ENCODE measurements at regions of chr21 and their contacts with region 1.

Region 1: DNA sequence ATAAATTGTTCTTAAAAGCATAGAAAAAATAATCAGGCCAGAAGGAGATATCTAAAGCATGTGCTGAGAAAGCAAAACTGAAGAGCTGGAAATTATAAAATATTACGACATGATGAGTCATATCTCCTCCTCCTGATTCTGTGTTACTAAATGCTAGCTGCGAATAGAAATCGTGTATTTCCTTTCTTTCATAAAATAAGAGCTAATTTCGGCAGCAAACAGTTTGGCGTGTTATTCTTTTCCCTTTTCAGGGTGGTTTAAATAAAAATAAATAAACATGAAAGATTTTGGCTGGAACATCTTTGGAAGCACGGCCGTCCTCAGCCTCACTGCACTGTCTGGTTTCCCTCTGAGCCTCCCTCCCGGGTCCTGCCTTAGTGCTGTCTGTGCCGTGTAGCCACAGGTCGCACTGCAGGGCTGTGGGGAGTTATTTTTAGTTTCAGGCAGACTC is 56.0 kb downstream of the ADARB1 start:
- DNase-seq: peak in 1 of 2 experiments; percentile 18
- ATAC-seq: peak in 1 of 2 experiments; percentile 58; a peak in 3 of 6 replicates
- H3K4me3 ChIP-seq: no peak overlapping the region
- H3K27ac ChIP-seq: peak overlapping the region in 1 of 2 experiments; percentile 44; a peak in 2 of 6 replicates
- H3K4me1 ChIP-seq: peaks cover 18% of the 10 kb centered on the region
- CTCF ChIP-seq: no peak
- EP300 ChIP-seq: no peak
- POLR2A ChIP-seq: no peak
- RAD21 ChIP-seq: no peak

Region 2: GRCh38 chr21:44478124-44478800 is 652.1 kb before region 1 on chr21:
- CTCF ChIA-PET with region 1: no interaction called
- POLR2A ChIA-PET with region 1: no interaction called
- DNase-seq: no peak
- ATAC-seq: no peak
- H3K4me3 ChIP-seq: no peak overlapping the region
- H3K27ac ChIP-seq: no peak overlapping the region
- H3K4me1 ChIP-seq: no peaks in the 10 kb centered on the region
- CTCF ChIP-seq: no peak
- EP300 ChIP-seq: no peak
- POLR2A ChIP-seq: no peak
- RAD21 ChIP-seq: no peak

Region 3: DNA sequence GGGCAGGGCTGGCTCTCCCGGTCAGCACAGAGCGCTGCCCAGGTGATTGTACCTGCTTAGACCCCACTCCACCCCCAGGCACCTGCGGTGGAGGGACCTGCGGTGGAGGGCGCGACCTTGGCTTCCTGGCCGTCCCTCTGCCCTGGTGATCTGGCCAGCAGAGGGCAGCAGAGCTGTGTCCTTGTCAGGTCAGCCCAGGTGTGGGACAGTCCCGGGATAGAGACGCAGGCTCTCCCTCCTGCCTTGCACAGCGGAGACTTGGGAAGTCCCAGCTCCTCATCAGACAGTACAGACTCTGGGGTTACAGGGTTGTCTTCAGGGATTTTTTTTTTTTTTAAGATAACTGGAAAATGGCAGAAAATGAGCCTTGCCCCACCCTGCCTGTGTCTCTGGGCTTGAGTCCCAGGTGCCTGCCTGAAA is 180.6 kb before region 1 on chr21:
- CTCF ChIA-PET with region 1: interaction called, 224 read pairs
- POLR2A ChIA-PET with region 1: interaction called, 3 read pairs
- DNase-seq: peak; percentile 65 to 70
- ATAC-seq: peak; percentile 67 to 93
- H3K4me3 ChIP-seq: no peak overlapping the region
- H3K27ac ChIP-seq: peak overlapping the region in 1 of 2 experiments; percentile 88; a peak in 3 of 6 replicates
- H3K4me1 ChIP-seq: peaks cover 36% of the 10 kb centered on the region
- CTCF ChIP-seq: peak; percentile 67
- EP300 ChIP-seq: no peak
- POLR2A ChIP-seq: no peak
- RAD21 ChIP-seq: peak; percentile 76

Region 4: DNA sequence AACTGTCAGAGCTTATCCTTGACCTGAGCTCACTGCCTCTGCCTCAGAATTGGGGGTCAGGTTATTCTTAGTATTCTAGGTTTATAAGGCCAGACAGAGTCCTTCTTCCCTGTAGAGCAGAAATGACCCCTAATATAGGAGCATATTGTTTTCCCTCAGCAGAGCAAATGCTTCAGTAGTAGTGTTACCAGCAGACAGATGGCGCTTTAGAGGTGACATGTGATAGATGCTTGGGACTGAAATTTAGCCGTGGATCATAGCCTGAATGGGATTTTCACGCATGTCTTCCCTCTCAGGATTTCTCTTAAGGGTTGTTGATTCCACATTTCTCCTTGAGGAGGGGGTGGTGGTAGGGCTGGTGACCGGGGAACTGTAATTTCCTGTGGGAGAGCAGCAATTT is 31.5 kb before region 1 on chr21:
- CTCF ChIA-PET with region 1: interaction called, 65 read pairs
- POLR2A ChIA-PET with region 1: no interaction called
- DNase-seq: peak in 1 of 2 experiments; percentile 14
- ATAC-seq: peak; percentile 68 to 69; a peak in 4 of 6 replicates
- H3K4me3 ChIP-seq: no peak overlapping the region
- H3K27ac ChIP-seq: no peak overlapping the region
- H3K4me1 ChIP-seq: peaks cover 11% of the 10 kb centered on the region; the same call in 2 of the 3 replicates
- CTCF ChIP-seq: peak; percentile 33; the same call in 2 of the 3 replicates
- EP300 ChIP-seq: no peak
- POLR2A ChIP-seq: no peak
- RAD21 ChIP-seq: peak in 1 of 2 experiments; percentile 17; a peak in 1 of 5 replicates

Region 5: DNA sequence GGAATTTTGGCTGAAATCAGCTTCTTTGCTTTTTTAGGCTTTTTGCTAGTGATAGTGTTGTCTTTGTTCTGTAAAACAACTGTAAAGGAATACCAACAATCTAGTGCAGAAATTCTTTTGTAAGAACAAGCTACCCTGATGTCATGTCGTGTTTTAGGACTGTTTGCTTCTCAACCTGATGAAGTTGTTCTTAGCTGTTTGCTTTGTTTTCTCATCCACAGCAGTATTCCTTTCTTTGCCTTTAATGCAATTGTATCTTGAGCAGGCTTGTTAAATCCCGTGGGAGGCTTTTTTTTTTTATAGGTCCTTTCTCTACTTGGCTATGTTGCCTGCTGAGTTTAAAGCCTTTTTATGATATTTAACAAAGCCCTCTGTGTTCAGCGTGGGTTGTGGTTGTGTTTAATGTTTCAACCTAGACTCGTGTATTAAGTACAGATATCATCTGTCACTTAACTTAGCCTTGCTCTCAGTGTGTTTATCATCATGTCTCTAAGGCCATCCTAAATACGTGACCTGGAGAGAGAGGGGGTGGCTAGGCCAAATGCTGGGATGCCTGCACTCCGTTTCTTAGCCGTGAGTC is 24.4 kb before region 1 on chr21:
- CTCF ChIA-PET with region 1: interaction called, 65 read pairs
- POLR2A ChIA-PET with region 1: no interaction called
- DNase-seq: no peak
- ATAC-seq: no peak
- H3K4me3 ChIP-seq: no peak overlapping the region
- H3K27ac ChIP-seq: no peak overlapping the region
- H3K4me1 ChIP-seq: peaks cover 19% of the 10 kb centered on the region; the same call in 2 of the 3 replicates
- CTCF ChIP-seq: no peak
- EP300 ChIP-seq: no peak
- POLR2A ChIP-seq: no peak
- RAD21 ChIP-seq: no peak

Region 6: GRCh38 chr21:45114072-45114471 is 16.3 kb before region 1 on chr21:
- CTCF ChIA-PET with region 1: interaction called, 10 read pairs
- POLR2A ChIA-PET with region 1: no interaction called
- DNase-seq: no peak
- ATAC-seq: no peak
- H3K4me3 ChIP-seq: no peak overlapping the region
- H3K27ac ChIP-seq: no peak overlapping the region
- H3K4me1 ChIP-seq: no peaks in the 10 kb centered on the region
- CTCF ChIP-seq: no peak
- EP300 ChIP-seq: no peak
- POLR2A ChIP-seq: no peak
- RAD21 ChIP-seq: no peak